ENCODE measurements at regions of chr20 and their contacts with region 1.

Region 1: DNA sequence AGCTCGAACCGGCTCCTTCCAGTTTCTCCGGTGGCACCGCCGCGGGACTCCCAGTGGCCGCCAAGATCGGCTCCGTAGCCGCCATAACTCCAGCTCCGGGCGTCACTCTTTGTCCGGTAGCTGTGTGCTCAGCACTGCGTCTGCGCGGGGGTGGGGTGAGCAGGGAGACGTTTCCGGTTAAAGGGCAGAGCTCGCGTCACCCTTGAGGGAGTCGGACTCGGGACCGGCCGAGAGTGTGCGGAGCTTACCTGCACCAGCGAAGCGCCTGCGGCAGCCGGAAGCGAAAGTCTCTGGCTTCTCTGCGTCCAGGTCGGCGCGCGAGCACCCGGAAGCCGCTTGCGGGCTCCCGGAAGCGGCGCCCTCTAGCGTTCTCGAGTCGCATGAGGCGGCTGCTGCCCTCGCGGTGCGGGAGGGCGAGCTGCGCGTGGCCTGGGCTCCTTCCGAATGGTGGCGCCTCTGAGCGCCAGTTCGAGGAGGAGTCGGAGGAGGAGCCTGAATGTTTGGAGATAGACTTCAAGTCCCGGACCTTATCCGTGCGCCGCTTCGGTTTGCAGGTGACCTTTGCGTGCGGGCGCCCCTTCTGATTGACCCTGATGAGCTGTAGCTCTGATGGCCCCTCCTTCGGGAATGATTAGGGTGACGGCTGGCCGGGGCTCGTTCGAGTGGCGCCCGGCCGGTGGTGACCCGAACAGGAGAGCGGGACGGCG is at the start of gene SCAND1:
- DNase-seq: peak; percentile 96
- H3K4me3 Mint-ChIP-seq: peak within 1 kb of the TSS; percentile 100
- H3K27ac Mint-ChIP-seq: peak within 1 kb of the TSS; percentile 100
- H3K4me1 Mint-ChIP-seq: peaks cover 21% of the 10 kb centered on the region
- H3K27me3 Mint-ChIP-seq: peaks cover 8% of the 10 kb centered on the region
- total RNA-seq, gene SCAND1: 39.7 and 41.2 TPM in 2 replicates

Region 2: GRCh38 chr20:34302723-34303528 is 1651.4 kb before region 1 on chr20 and contains the start of gene AHCY:
- intact Hi-C with region 1: loop called (anchors 2 kb)
- DNase-seq: peak; percentile 93
- H3K4me3 Mint-ChIP-seq: peak within 1 kb of the TSS; percentile 83
- H3K27ac Mint-ChIP-seq: peak within 1 kb of the TSS; percentile 92
- H3K4me1 Mint-ChIP-seq: peaks cover 19% of the 10 kb centered on the region
- H3K27me3 Mint-ChIP-seq: no peaks in the 10 kb centered on the region
- total RNA-seq, gene AHCY: 130 and 132 TPM in 2 replicates

Region 3: DNA sequence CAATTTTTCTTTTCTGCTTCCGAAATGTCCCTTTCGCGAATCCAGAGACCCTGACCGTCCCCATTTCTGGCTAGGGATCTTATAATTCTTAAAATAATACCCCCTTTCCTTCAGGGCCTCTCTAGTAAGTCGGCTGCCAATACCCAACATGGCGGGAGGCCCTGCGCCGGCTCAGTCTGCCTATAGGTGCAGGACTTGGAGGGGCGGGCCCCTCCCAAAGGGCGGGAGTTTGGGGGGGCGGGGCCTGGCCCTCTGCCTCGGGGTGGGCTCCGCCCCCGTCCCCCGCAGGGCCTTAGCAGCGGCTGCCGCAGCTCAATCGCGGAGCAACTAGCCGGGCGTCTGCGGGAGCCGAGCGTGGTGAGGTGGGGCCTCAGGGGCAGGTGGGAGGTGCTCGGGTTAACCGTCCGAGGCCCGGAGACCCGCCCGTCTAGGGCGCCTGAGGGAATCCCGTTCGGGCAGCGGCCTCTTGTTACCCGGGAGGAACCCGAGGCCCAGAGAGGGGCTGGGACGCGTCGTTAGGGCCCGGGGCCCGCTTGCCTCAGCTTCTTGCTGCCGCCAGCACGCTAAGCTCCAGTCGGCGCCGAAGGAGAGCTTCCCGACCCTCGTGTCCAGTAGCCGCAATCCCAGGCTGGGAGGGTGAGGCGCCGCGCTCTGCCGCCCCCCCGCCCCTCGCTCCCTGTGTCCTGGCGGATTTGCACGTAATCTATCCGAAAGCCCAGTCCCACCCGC is 499.3 kb before region 1 on chr20 and contains the start of gene CEP250:
- intact Hi-C with region 1: loop called (anchors 1 kb)
- DNase-seq: peak; percentile 88
- H3K4me3 Mint-ChIP-seq: peak within 1 kb of the TSS; percentile 93
- H3K27ac Mint-ChIP-seq: peak within 1 kb of the TSS; percentile 99
- H3K4me1 Mint-ChIP-seq: peaks cover 22% of the 10 kb centered on the region
- H3K27me3 Mint-ChIP-seq: no peaks in the 10 kb centered on the region
- total RNA-seq, gene CEP250: 44.4 and 45.6 TPM in 2 replicates

Region 4: DNA sequence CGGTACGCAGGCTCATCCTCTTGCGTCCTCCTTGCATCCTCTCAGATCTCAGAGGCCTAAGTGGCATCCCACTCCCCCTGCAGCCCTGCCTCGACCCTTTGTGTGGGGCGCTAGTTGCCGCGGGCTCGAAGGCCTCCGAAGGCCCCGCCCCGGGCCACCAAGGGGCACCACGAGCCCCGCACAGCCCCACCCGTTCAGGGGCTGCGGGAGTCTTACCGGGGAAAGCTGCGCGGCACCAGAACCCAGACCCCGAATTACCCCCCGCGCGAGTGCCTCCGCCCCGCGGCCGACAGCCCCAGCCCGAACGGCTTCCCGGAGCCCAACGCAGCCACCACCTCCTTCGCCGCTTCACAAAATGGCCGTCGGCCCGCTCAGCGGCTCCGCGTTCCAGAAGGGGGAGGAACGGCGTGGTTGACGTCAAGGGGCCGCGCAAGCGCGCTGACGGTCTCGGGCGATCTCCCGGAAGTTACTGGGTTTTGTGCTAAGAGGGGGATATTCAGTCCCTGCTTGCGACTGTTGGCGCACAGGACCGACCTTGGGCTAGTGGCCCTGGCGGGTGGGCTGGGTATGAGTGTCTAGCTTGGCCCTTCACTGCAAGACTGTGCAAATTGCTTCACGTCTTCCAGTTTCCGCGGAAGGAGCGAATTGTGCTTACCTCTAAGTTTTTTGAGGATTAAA is 289.7 kb before region 1 on chr20 and contains the starts of genes CPNE1 and RBM12:
- intact Hi-C with region 1: loop called (anchors 1 kb)
- DNase-seq: peak; percentile 91
- H3K4me3 Mint-ChIP-seq: peak within 1 kb of the TSS; percentile 95
- H3K27ac Mint-ChIP-seq: peak within 1 kb of the TSS; percentile 99
- H3K4me1 Mint-ChIP-seq: peaks cover 48% of the 10 kb centered on the region
- H3K27me3 Mint-ChIP-seq: no peaks in the 10 kb centered on the region
- total RNA-seq, gene CPNE1: 304 and 308 TPM in 2 replicates
- total RNA-seq, gene RBM12: 151 and 168 TPM in 2 replicates

Region 5: GRCh38 chr20:35771689-35772562 is 182.4 kb before region 1 on chr20 and contains the start of gene PHF20:
- intact Hi-C with region 1: loop called (anchors 1 kb)
- DNase-seq: peak; percentile 98
- H3K4me3 Mint-ChIP-seq: peak within 1 kb of the TSS; percentile 94
- H3K27ac Mint-ChIP-seq: peak within 1 kb of the TSS; percentile 95
- H3K4me1 Mint-ChIP-seq: peaks cover 60% of the 10 kb centered on the region
- H3K27me3 Mint-ChIP-seq: no peaks in the 10 kb centered on the region
- total RNA-seq, gene PHF20: 50.5 and 61.9 TPM in 2 replicates

Region 6: GRCh38 chr20:36460648-36461599 is 506.6 kb after region 1 on chr20:
- intact Hi-C with region 1: loop called (anchors 1 kb)
- DNase-seq: peak; percentile 81
- H3K4me3 Mint-ChIP-seq: peak overlapping the region; percentile 70
- H3K27ac Mint-ChIP-seq: peak overlapping the region; percentile 87
- H3K4me1 Mint-ChIP-seq: peaks cover 48% of the 10 kb centered on the region
- H3K27me3 Mint-ChIP-seq: peaks cover 5% of the 10 kb centered on the region

Region 7: DNA sequence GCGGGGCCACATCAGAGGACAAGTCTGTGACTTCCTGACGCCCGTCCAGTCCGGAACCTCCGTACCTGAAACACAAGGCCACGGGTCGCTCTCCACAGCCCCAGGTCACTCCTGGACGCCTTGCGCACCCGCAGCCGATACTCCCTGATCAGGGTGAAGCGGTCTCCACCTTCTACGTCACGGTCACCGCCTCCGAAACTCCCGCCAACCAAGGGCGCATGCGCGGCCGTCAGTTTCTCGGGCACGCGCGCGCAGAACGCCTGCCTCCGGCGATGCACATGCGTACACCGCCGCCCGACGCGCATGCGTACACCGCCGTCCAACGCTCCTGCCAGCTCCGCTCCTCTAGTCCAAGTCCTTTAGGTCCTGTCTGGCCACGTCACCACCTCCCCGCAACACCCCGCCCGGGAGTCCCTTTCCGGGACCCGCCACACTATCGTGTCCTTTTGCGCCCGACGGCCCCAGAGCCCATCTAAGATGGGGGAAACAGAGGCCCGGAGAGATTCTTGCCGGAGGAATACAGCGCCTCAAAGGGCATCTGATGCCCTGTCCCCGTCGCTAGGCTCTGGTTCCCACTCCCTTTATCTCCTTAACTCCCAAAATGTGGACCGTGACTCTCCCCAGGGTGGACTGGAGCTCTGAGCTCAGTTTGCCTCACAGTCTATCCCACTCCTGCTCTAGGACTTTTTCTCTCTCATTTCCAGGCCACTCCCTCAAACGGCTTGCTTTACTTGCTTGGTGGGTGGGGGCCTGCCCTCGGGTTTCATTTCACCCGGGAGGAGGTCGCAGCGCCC is 819.4 kb after region 1 on chr20 and contains the start of gene DSN1:
- intact Hi-C with region 1: loop called (anchors 5 kb)
- DNase-seq: peak; percentile 98
- H3K4me3 Mint-ChIP-seq: peak within 1 kb of the TSS; percentile 86
- H3K27ac Mint-ChIP-seq: peak within 1 kb of the TSS; percentile 95
- H3K4me1 Mint-ChIP-seq: peaks cover 48% of the 10 kb centered on the region
- H3K27me3 Mint-ChIP-seq: peaks cover 6% of the 10 kb centered on the region
- total RNA-seq, gene DSN1: 23.2 and 29.0 TPM in 2 replicates